Adrenal gland (tissue), 19 donors: ENCODE measurements at regions of chr3 and their contacts with region 1.

Region 1: GRCh38 chr3:55198543-55198942 is 270.7 kb upstream of the LRTM1 start:
- DNase-seq: no peak
- H3K4me3 ChIP-seq: no peak overlapping the region
- H3K27ac ChIP-seq: no peak overlapping the region
- H3K4me1 ChIP-seq: no peaks in the 10 kb centered on the region
- H3K27me3 ChIP-seq: no peaks in the 10 kb centered on the region
- CTCF ChIP-seq: no peak
- POLR2A ChIP-seq: no peak

Region 2: GRCh38 chr3:54859184-54859583 is 339.4 kb before region 1 on chr3:
- intact Hi-C with region 1: loop called in 1 of 2 experiments (anchors 10 kb)
- DNase-seq: no peak
- H3K4me3 ChIP-seq: no peak overlapping the region
- H3K27ac ChIP-seq: no peak overlapping the region
- H3K4me1 ChIP-seq: peaks cover 3 to 27% of the 10 kb centered on the region in 2 donors
- H3K27me3 ChIP-seq: no peaks in the 10 kb centered on the region
- CTCF ChIP-seq: no peak
- POLR2A ChIP-seq: no peak

Region 3: GRCh38 chr3:55282994-55283393 is 84.5 kb after region 1 on chr3:
- intact Hi-C with region 1: no loop called
- DNase-seq: no peak
- H3K4me3 ChIP-seq: no peak overlapping the region
- H3K27ac ChIP-seq: no peak overlapping the region
- H3K4me1 ChIP-seq: no peaks in the 10 kb centered on the region
- H3K27me3 ChIP-seq: no peaks in the 10 kb centered on the region
- CTCF ChIP-seq: no peak
- POLR2A ChIP-seq: no peak